Sigmoid colon (tissue), 7 donors: ENCODE measurements at regions of chr2 and their contacts with region 1.

Region 1: DNA sequence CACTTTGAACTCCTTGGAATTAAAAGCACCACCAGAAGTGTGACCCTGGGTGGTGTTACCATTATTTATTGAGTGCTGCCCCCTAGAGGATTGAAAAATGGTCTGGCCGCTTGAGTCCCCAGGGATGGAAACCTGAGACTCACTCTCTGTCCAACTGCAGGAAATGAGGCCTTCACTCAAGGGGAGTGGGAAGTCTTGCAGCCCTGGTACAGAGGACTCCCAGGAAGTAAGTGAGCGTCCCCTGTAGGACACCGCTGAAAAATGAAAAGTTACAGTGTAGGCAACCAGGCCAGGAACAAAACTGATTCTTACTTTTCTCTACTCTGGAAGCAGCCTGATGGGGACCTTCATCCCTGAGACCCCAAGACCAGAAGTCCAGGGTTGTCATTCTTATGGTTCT is 2.2 kb upstream of the NRP2 start:
- DNase-seq: peak; percentile 77
- H3K4me3 ChIP-seq: no peak overlapping the region
- H3K27ac ChIP-seq: peak overlapping the region in 3 of 4 donors; percentile 94 to 99 (median 96)
- H3K4me1 ChIP-seq: peaks cover 0 to 26% (median 23%) of the 10 kb centered on the region in 4 donors
- H3K27me3 ChIP-seq: no peaks in the 10 kb centered on the region
- CTCF ChIP-seq: peak; percentile 34 to 76 (median 56)
- EP300 ChIP-seq: no peak
- POLR2A ChIP-seq: no peak

Region 2: DNA sequence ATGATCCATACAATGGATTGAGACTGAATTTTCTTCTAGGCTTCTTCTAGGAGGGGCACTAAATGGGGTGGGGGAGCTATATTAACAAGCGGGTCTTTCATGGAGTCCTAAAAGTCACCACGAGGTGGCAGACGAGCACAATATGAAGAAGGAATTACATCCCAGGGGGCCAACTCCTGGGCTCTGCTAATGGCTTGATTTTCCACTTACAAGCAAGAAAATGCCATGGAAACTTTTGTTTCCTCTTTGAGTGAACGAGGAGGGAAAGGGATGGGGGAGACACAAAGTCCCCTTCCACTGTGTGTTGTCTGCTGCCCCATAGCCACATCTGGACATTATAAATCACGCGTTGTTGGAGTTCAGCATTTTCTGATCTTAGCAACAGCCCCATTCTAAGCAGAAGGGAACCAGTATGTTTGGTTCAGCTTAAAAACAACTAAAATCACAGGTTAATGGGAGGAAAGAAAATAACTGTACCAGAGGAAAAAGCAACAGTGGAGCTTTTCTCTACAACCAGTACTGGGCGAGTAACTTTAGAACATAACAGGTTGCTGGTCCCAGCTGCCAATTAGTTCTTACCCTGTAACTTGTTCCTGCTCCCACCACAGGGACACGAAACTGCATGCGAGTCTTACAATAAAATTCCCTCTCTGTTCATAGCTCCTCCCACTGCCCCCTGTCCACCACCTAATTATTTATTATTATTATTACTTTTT is 1419.7 kb before region 1 on chr2:
- intact Hi-C with region 1: loop called (anchors 2 kb)
- DNase-seq: peak; percentile 84
- H3K4me3 ChIP-seq: no peak overlapping the region
- H3K27ac ChIP-seq: no peak overlapping the region
- H3K4me1 ChIP-seq: peaks cover 0 to 20% (median 12%) of the 10 kb centered on the region in 4 donors
- H3K27me3 ChIP-seq: no peaks in the 10 kb centered on the region
- CTCF ChIP-seq: peak; percentile 54 to 89 (median 83)
- EP300 ChIP-seq: no peak
- POLR2A ChIP-seq: no peak

Region 3: DNA sequence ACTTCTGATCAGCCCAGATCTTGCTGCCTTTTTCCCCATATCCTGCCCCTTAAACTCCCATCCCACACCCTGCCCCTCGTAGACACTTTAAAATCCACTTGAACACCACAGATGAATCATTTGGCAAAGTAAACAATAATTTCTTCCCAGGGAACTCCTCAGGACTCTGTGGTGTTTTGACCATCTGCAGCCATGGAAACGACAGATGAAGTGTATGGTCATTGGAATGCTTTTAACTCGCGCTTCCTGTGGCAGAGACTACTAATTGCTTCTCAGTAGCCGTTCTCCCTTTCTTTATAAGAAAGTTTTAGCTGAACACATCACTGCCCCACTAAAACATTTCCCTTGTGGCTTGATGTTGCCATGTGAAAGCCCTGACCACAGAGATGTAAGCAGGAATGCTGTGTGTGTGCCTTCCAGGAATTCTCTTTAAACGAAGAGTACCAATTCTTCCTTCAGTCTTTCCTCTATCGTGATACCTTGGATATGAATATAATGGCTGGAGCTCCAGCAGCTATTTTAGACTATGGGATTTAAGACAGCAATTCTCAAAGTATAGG is 1227.5 kb before region 1 on chr2:
- intact Hi-C with region 1: loop called (anchors 5 kb)
- DNase-seq: peak; percentile 79
- H3K4me3 ChIP-seq: no peak overlapping the region
- H3K27ac ChIP-seq: peak overlapping the region; percentile 78 to 90 (median 86)
- H3K4me1 ChIP-seq: peaks cover 0 to 81% (median 64%) of the 10 kb centered on the region in 4 donors
- H3K27me3 ChIP-seq: no peaks in the 10 kb centered on the region
- CTCF ChIP-seq: peak in 1 of 4 experiments; percentile 9
- EP300 ChIP-seq: peak in 1 of 4 donors; percentile 19
- POLR2A ChIP-seq: no peak

Region 4: DNA sequence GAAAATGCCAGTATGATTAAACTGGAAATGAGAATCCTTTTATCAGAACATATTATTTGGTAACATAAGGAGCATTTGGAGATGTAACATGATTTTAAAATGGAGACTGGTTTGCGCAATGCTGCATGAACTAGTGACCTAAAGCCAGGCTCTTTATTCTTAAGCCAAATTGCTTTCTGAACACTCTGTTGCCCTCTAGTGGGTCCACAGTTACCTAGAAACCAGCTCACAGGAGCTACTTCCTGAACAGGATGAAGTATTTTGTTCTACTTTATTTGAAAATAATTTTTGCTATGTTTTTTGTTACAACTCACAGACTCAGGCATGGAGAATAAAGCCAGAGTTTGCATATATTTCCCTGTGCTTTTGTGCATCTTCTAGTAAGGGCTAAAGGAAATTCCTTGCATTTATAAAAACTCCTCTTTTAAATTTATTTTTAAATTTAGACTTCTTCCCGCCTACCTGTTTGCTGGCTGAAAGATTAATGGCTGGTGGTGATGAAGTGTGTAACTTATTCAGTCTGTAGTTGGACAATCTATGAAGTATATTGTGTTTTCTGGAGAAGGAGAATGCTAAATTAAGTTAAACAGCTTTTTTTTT is 988.1 kb before region 1 on chr2:
- intact Hi-C with region 1: loop called (anchors 5 kb)
- DNase-seq: peak; percentile 75
- H3K4me3 ChIP-seq: no peak overlapping the region
- H3K27ac ChIP-seq: peak overlapping the region in 2 of 4 donors; percentile 3 to 8
- H3K4me1 ChIP-seq: peaks cover 0 to 56% (median 35%) of the 10 kb centered on the region in 4 donors
- H3K27me3 ChIP-seq: no peaks in the 10 kb centered on the region
- CTCF ChIP-seq: peak; percentile 47 to 74 (median 64)
- EP300 ChIP-seq: peak in 1 of 4 donors; percentile 28
- POLR2A ChIP-seq: no peak

Region 5: DNA sequence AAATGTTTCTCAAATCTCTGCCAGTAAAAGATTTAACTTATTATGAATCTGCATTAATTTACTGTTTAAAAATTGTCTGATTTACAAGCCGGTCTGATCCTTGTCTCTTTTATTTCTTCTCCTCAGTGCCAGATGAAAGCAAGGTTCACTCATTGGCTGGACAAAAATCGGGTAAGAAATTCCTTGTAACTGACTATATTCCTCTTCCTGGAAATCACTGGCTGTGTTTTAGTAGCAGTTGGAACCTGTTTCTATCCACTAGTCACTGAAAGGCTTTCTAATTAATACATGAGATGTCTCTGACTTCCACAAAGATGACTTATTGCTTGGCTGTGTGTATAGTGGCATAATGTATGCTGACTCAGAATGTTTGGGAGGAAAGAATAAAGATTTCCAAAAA is 434.4 kb before region 1 on chr2:
- intact Hi-C with region 1: loop called (anchors 5 kb)
- DNase-seq: no peak
- H3K4me3 ChIP-seq: no peak overlapping the region
- H3K27ac ChIP-seq: peak overlapping the region in 3 of 4 donors; percentile 18 to 72 (median 66)
- H3K4me1 ChIP-seq: peaks cover 0 to 25% (median 21%) of the 10 kb centered on the region in 4 donors
- H3K27me3 ChIP-seq: no peaks in the 10 kb centered on the region
- CTCF ChIP-seq: no peak
- EP300 ChIP-seq: peak in 2 of 4 donors; percentile 26 to 67
- POLR2A ChIP-seq: no peak

Region 6: GRCh38 chr2:205892251-205892655 is 212.2 kb after region 1 on chr2:
- intact Hi-C with region 1: loop called (anchors 2 kb)
- DNase-seq: peak; percentile 88
- H3K4me3 ChIP-seq: peak overlapping the region in 1 of 4 donors; percentile 12
- H3K27ac ChIP-seq: peak overlapping the region; percentile 43 to 77 (median 74)
- H3K4me1 ChIP-seq: peaks cover 0 to 43% (median 18%) of the 10 kb centered on the region in 4 donors
- H3K27me3 ChIP-seq: no peaks in the 10 kb centered on the region
- CTCF ChIP-seq: no peak
- EP300 ChIP-seq: no peak
- POLR2A ChIP-seq: no peak